Naive thymus-derived CD8-positive, alpha-beta T cell (primary cell): ENCODE measurements at regions of chr3 and their contacts with region 1.

Region 1: DNA sequence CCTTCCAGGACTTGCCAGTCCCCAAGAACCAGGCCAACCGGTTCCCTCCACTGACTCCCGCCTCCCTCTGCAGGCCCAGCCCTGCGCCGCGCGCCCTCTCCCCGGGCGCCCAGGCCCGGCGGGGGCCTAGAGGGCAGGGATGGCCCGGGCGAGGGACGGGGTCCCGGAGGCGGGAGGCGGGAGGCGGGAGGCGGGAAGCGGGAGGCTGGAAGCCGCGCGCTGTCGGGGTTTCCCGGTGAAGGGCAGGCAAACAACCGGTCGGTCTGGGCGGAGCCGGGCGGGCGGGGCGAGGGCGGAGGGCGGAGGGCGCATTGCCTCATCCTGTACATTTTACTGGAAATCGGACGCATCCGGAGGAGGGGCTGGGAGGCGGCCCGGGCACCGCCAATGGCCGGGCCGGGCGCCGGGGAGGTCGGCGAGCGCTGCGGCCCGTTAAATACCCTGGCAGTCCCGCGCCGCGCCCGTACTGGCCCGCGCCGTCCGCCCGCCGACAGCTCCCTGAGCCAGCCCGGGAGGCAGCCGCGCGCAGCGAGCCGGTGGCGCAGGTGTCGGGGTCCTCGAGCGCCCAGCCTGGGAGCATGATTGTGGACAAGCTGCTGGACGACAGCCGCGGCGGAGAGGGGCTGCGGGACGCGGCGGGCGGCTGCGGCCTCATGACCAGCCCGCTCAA is at the start of gene NFKBIZ:
- DNase-seq: peak; percentile 84 to 95 (median 89)
- ATAC-seq: peak; percentile 70 to 75
- H3K4me3 Mint-ChIP-seq: peak within 1 kb of the TSS; percentile 88 to 100 (median 97)
- H3K27ac Mint-ChIP-seq: peak within 1 kb of the TSS; percentile 98 to 100 (median 99)
- H3K4me1 Mint-ChIP-seq: peaks cover 28 to 40% (median 38%) of the 10 kb centered on the region in 4 donors
- H3K27me3 Mint-ChIP-seq: no peaks in the 10 kb centered on the region
- polyA plus RNA-seq, gene NFKBIZ: 9.3 to 23.6 (median 20.2) TPM

Region 2: GRCh38 chr3:101724329-101725193 is 124.6 kb before region 1 on chr3 and contains the start of gene CEP97:
- POLR2A ChIA-PET with region 1: interaction called, 11 read pairs
- DNase-seq: peak; percentile 74 to 97 (median 82)
- ATAC-seq: peak; percentile 95
- H3K4me3 Mint-ChIP-seq: peak within 1 kb of the TSS; percentile 94 to 100 (median 98)
- H3K27ac Mint-ChIP-seq: peak within 1 kb of the TSS; percentile 94 to 99 (median 98)
- H3K4me1 Mint-ChIP-seq: peaks cover 15 to 42% (median 33%) of the 10 kb centered on the region in 4 donors
- H3K27me3 Mint-ChIP-seq: no peaks in the 10 kb centered on the region
- polyA plus RNA-seq, gene CEP97: 1.8 to 5.3 (median 3.5) TPM

Region 3: GRCh38 chr3:101809178-101810021 is 39.8 kb before region 1 on chr3:
- POLR2A ChIA-PET with region 1: interaction called, 20 read pairs
- DNase-seq: peak in 9 of 10 donors; percentile 20 to 67 (median 45)
- ATAC-seq: peak; percentile 77 to 83
- H3K4me3 Mint-ChIP-seq: peak overlapping the region in 8 of 10 donors; percentile 12 to 66 (median 46)
- H3K27ac Mint-ChIP-seq: peak overlapping the region; percentile 65 to 90 (median 83)
- H3K4me1 Mint-ChIP-seq: peaks cover 8 to 43% (median 38%) of the 10 kb centered on the region in 4 donors
- H3K27me3 Mint-ChIP-seq: no peaks in the 10 kb centered on the region

Region 4: GRCh38 chr3:101838691-101839090 is 10.5 kb before region 1 on chr3:
- POLR2A ChIA-PET with region 1: interaction called, 12 read pairs
- DNase-seq: no peak
- ATAC-seq: no peak
- H3K4me3 Mint-ChIP-seq: no peak overlapping the region
- H3K27ac Mint-ChIP-seq: no peak overlapping the region
- H3K4me1 Mint-ChIP-seq: peaks cover 10 to 46% (median 20%) of the 10 kb centered on the region in 4 donors
- H3K27me3 Mint-ChIP-seq: no peaks in the 10 kb centered on the region

Region 5: DNA sequence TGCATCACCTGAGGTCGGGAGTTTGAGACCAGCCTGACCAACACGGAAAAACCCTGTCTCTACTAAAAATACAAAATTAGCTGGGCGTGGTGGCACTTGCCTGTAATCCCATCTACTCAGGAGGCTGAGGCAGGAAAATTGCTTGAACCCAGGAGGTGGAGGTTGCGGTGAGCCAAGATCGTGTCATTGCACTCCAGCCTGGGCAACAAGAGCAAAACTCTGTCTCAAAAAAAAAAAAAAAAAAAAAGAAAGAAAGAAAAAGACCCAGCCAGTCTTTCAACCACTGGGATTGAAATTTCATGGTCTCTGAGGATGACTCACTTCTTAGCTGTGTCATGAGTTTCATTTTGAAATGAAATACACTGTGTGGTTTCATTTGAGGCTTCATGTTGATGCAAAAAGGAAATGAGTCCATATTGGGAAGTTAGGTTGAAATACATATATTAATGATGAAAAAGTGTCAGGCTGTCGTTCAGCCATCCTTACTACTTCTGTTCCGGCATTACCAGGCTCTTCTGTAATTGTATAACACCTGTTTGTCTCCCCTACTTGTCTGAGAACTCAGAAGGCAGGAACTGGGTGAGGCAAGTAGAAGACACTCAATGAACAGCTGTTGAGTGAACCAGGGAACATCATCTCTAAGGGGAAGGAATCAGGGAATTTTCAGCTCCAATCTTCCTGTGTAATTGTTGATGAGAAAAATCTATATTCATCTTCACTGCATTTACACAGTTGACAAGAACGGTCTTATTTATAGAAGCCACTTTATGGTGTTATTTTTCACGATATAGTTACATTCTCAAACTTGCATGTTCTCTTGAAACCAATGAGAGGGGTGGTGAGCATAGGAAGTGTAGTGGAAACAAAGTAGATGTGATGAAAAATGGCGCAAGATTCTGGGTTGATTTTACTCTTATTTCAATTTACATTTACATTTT is 87.5 kb after region 1 on chr3:
- POLR2A ChIA-PET with region 1: interaction called, 12 read pairs
- DNase-seq: peak in 4 of 10 donors; percentile 14 to 61 (median 44)
- ATAC-seq: peak; percentile 92 to 94
- H3K4me3 Mint-ChIP-seq: peak overlapping the region in 9 of 10 donors; percentile 56 to 76 (median 69)
- H3K27ac Mint-ChIP-seq: peak overlapping the region; percentile 75 to 94 (median 84)
- H3K4me1 Mint-ChIP-seq: peaks cover 15 to 33% (median 22%) of the 10 kb centered on the region in 4 donors
- H3K27me3 Mint-ChIP-seq: no peaks in the 10 kb centered on the region

Region 6: DNA sequence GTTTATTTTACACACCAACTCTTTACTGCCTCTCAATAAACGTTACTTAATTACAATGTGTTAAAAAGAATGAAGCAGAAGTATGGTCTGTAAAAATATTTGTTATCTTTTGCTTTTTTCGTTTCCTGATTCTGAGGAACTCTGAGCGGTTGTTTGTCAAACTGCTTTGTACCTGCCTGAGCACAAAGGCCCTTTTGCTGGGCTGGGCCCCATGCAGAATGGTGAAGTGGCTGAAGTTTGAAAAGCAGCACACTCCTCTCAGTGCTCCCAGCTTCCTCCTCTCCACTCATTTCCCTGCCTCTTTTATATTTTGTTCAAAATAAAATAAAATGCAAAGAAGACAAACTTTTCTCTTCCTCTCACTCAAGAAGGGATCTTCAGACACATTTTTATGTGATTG is 229.7 kb after region 1 on chr3:
- POLR2A ChIA-PET with region 1: interaction called, 27 read pairs
- DNase-seq: peak in 6 of 10 donors; percentile 9 to 56 (median 31)
- ATAC-seq: peak; percentile 86 to 91
- H3K4me3 Mint-ChIP-seq: peak overlapping the region; percentile 38 to 81 (median 68)
- H3K27ac Mint-ChIP-seq: peak overlapping the region; percentile 93 to 99 (median 96)
- H3K4me1 Mint-ChIP-seq: peaks cover 28 to 63% (median 58%) of the 10 kb centered on the region in 4 donors
- H3K27me3 Mint-ChIP-seq: no peaks in the 10 kb centered on the region